RWPE1 (cell line): ENCODE measurements at regions of chr20 and their contacts with region 1.

Region 1: DNA sequence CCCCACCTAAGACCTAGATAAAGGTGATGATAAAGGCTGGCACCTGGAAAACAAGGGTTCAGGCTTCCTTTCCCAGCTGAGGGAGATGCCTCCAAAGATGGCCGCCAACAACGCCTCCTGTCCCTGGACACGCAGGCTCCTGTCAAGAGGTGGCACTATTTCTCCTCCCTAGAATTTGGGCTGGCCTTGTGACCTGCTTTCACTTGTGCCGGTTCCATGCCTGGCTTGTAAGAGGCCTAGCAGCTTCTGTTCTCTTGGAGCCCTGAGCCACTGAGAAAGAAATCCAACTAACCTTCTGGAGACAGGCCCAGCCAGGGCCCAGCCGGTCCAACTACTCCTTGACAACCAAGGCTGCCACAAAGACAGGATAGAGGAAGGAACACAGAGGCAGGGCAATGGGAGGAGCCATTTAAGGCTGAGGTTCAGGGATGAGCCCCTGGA is 60.2 kb upstream of the RALY start:
- DNase-seq: peak; percentile 53
- H3K27ac ChIP-seq: no peak overlapping the region
- CTCF ChIP-seq: peak; percentile 31; the same call in 1 of the 2 replicates

Region 2: DNA sequence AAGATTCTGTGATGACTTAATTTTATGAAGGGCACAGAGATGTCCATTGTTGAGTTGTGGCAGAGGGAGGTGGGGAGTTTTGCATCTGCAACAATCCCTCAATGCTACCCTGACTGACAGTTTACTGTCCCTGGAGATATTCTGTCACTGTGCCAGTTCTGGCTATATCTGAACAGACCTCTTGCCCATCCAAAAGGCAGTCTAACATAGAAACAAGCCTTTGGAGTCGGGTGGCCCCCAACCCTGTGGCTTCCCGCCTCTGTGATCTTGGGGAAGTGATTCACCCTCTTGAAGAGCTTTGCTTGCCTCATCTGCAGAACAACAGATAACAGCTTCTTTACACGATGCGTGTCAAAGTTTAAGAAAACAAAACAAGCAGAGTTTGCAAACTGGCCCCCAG is 243.5 kb before region 1 on chr20:
- CTCF ChIA-PET with region 1: no interaction called
- POLR2A ChIA-PET with region 1: no interaction called
- DNase-seq: no peak
- H3K27ac ChIP-seq: no peak overlapping the region
- CTCF ChIP-seq: no peak

Region 3: GRCh38 chr20:33846291-33846935 is 87.1 kb before region 1 on chr20:
- CTCF ChIA-PET with region 1: no interaction called
- POLR2A ChIA-PET with region 1: no interaction called
- DNase-seq: no peak
- H3K27ac ChIP-seq: no peak overlapping the region
- CTCF ChIP-seq: no peak

Region 4: GRCh38 chr20:33971147-33971975 is 37.9 kb after region 1 on chr20:
- CTCF ChIA-PET with region 1: no interaction called
- POLR2A ChIA-PET with region 1: no interaction called
- DNase-seq: no peak
- H3K27ac ChIP-seq: no peak overlapping the region
- CTCF ChIP-seq: no peak

Region 5: GRCh38 chr20:34069341-34070078 is 136.0 kb after region 1 on chr20:
- CTCF ChIA-PET with region 1: interaction called, 19 read pairs
- POLR2A ChIA-PET with region 1: no interaction called
- DNase-seq: peak; percentile 85
- H3K27ac ChIP-seq: no peak overlapping the region
- CTCF ChIP-seq: peak; percentile 94